ENCODE measurements at regions of chr17 and their contacts with region 1.

Region 1: GRCh38 chr17:752002-752619 is at the start of gene GEMIN4:
- DNase-seq: peak; percentile 99
- ATAC-seq: peak; percentile 86
- H3K4me3 Mint-ChIP-seq: peak within 1 kb of the TSS; percentile 99
- H3K27ac Mint-ChIP-seq: peak within 1 kb of the TSS; percentile 97
- H3K4me1 Mint-ChIP-seq: peaks cover 32% of the 10 kb centered on the region
- H3K27me3 Mint-ChIP-seq: no peaks in the 10 kb centered on the region
- total RNA-seq, gene GEMIN4: 49.7 to 56.1 TPM

Region 2: GRCh38 chr17:143782-144281 is 608.3 kb before region 1 on chr17:
- CTCF ChIA-PET with region 1: no interaction called
- POLR2A ChIA-PET with region 1: no interaction called
- intact Hi-C with region 1: loop called in 1 of 2 experiments (anchors 2 kb)
- DNase-seq: peak; percentile 93
- ATAC-seq: peak; percentile 87
- H3K4me3 Mint-ChIP-seq: no peak overlapping the region
- H3K27ac Mint-ChIP-seq: no peak overlapping the region
- H3K4me1 Mint-ChIP-seq: no peaks in the 10 kb centered on the region
- H3K27me3 Mint-ChIP-seq: no peaks in the 10 kb centered on the region

Region 3: GRCh38 chr17:320809-321653 is 431.1 kb before region 1 on chr17:
- CTCF ChIA-PET with region 1: no interaction called
- POLR2A ChIA-PET with region 1: interaction called, 11 read pairs
- intact Hi-C with region 1: no loop called
- DNase-seq: no peak
- ATAC-seq: no peak
- H3K4me3 Mint-ChIP-seq: no peak overlapping the region
- H3K27ac Mint-ChIP-seq: no peak overlapping the region
- H3K4me1 Mint-ChIP-seq: no peaks in the 10 kb centered on the region
- H3K27me3 Mint-ChIP-seq: no peaks in the 10 kb centered on the region

Region 4: GRCh38 chr17:705863-706262 is 46.2 kb before region 1 on chr17:
- CTCF ChIA-PET with region 1: no interaction called
- POLR2A ChIA-PET with region 1: no interaction called
- intact Hi-C with region 1: no loop called
- DNase-seq: no peak
- ATAC-seq: no peak
- H3K4me3 Mint-ChIP-seq: no peak overlapping the region
- H3K27ac Mint-ChIP-seq: no peak overlapping the region
- H3K4me1 Mint-ChIP-seq: peaks cover 9% of the 10 kb centered on the region
- H3K27me3 Mint-ChIP-seq: no peaks in the 10 kb centered on the region

Region 5: DNA sequence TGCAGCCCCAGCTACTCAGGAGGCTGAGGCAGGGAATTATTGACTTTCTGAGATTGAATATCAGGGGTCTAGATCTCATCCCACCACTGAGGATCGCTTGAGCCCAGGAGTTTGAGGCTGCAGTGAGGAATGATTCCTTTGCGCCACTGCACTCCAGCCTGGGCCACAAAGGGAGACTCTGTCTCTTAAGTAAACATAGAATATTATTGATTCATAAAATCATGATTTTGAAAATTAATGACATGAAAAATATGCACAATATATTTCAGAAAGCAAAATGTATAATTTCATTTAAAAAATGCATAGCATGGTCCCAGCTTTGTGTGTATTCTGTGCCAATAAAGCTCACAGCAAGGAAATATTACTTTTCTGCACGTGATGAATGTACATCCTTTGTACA is 35.9 kb before region 1 on chr17:
- CTCF ChIA-PET with region 1: interaction called, 6 read pairs
- POLR2A ChIA-PET with region 1: interaction called, 8 read pairs
- intact Hi-C with region 1: loop called (anchors 1 to 2 kb)
- DNase-seq: no peak
- ATAC-seq: no peak
- H3K4me3 Mint-ChIP-seq: no peak overlapping the region
- H3K27ac Mint-ChIP-seq: no peak overlapping the region
- H3K4me1 Mint-ChIP-seq: peaks cover 26% of the 10 kb centered on the region
- H3K27me3 Mint-ChIP-seq: no peaks in the 10 kb centered on the region

Region 6: GRCh38 chr17:732067-732901 is 19.8 kb before region 1 on chr17 and contains the start of gene TLCD3A:
- CTCF ChIA-PET with region 1: interaction called, 3 read pairs
- POLR2A ChIA-PET with region 1: interaction called, 4 read pairs
- intact Hi-C with region 1: loop called in 1 of 2 experiments (anchors 1 kb)
- DNase-seq: peak; percentile 77
- ATAC-seq: peak; percentile 68
- H3K4me3 Mint-ChIP-seq: peak within 1 kb of the TSS; percentile 87
- H3K27ac Mint-ChIP-seq: peak within 1 kb of the TSS; percentile 70
- H3K4me1 Mint-ChIP-seq: peaks cover 11% of the 10 kb centered on the region
- H3K27me3 Mint-ChIP-seq: peaks cover 21% of the 10 kb centered on the region
- total RNA-seq, gene TLCD3A: 13.8 to 25.9 TPM

Region 7: DNA sequence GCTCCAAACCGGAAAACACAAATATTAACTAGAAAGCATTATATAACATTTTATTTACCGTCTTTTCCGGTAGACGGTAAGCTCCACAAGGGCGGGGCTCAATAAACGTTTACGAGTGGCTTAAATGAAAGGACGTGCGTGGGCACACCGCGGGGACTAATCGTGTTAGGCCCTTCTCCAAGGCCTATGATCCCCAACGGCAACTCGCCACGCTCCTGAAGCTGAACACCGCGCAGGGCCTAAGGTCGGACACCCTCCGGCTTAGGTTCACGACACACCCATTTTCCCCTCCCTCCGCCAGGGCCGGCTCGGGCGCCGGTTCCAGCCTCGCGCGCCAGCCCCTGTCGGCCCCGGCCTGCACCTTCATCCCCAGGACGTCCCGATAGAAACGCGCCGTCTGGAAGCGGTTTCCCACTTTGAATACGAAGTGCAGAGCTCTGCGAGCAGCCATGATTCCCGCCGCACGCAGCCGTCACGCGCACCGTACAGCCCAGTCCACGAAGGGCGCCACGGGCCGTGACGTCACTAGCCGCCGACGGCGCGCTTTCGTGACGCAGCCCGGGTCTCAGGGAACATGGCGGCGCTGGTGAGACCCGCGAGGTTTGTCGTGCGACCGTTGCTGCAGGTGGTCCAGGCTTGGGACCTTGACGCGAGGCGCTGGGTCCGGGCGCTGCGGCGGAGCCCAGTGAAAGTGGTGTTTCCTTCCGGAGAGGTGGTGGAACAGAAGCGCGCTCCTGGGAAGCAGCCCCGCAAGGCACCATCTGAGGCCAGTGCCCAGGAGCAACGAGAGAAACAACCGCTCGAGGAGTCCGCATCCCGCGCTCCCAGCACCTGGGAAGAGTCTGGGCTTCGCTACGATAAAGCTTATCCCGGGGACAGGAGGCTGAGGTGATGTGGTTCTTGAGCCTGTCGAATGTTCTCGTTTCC is 30.0 kb after region 1 on chr17 and contains the starts of genes GLOD4 and MRM3:
- CTCF ChIA-PET with region 1: interaction called, 7 read pairs
- POLR2A ChIA-PET with region 1: interaction called, 5 read pairs
- intact Hi-C with region 1: loop called in 1 of 2 experiments (anchors 1 kb)
- DNase-seq: peak; percentile 96
- ATAC-seq: peak; percentile 89
- H3K4me3 Mint-ChIP-seq: peak within 1 kb of the TSS; percentile 97
- H3K27ac Mint-ChIP-seq: peak within 1 kb of the TSS; percentile 96
- H3K4me1 Mint-ChIP-seq: peaks cover 35% of the 10 kb centered on the region
- H3K27me3 Mint-ChIP-seq: no peaks in the 10 kb centered on the region
- total RNA-seq, gene GLOD4: 59.5 to 64.0 TPM
- total RNA-seq, gene MRM3: 20.6 to 31.4 TPM

Measured in activated CD4-positive, alpha-beta T cell treated with anti-CD3 and anti-CD28 coated beads for 36 hours (primary cell).